ENCODE measurements at regions of chr14 and their contacts with region 1.

Region 1: DNA sequence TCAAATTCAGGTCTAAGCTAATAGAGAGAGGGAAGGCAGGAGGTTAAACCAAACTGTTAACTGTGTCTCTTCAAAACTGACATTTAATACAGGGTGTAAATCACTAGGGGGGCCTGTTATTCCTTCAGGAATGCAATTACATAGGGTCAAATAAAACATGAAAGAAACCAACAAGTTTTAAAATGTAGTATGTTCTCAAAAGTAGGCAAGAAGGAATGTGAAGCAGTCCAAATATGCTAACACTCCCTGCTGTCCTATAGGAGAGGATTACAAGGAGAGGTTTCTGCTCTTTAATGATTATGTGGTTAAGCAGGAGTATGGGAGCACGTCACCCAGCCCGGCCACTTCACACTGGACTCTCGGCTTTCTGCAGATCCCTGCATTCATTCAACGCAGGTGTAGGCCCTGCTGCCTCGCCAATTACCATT is 42.5 kb upstream of the BMP4 start:
- DNase-seq: peak; percentile 88 to 93
- H3K4me3 ChIP-seq: no peak overlapping the region
- H3K4me3 Mint-ChIP-seq: peak overlapping the region; percentile 61
- H3K27ac Mint-ChIP-seq: peak overlapping the region; percentile 96
- H3K4me1 ChIP-seq: peaks cover 58% of the 10 kb centered on the region
- H3K4me1 Mint-ChIP-seq: peaks cover 50% of the 10 kb centered on the region
- H3K27me3 ChIP-seq: no peaks in the 10 kb centered on the region
- H3K27me3 Mint-ChIP-seq: no peaks in the 10 kb centered on the region
- CTCF ChIP-seq: no peak

Region 2: GRCh38 chr14:53850714-53851296 is 148.3 kb before region 1 on chr14:
- CTCF ChIA-PET with region 1: no interaction called
- POLR2A ChIA-PET with region 1: no interaction called
- intact Hi-C with region 1: loop called (anchors 2 kb)
- DNase-seq: peak; percentile 50 to 57
- H3K4me3 ChIP-seq: peak overlapping the region; percentile 10
- H3K4me3 Mint-ChIP-seq: peak overlapping the region; percentile 75
- H3K27ac Mint-ChIP-seq: peak overlapping the region; percentile 86
- H3K4me1 ChIP-seq: peaks cover 68% of the 10 kb centered on the region
- H3K4me1 Mint-ChIP-seq: peaks cover 38% of the 10 kb centered on the region
- H3K27me3 ChIP-seq: no peaks in the 10 kb centered on the region
- H3K27me3 Mint-ChIP-seq: no peaks in the 10 kb centered on the region
- CTCF ChIP-seq: no peak

Region 3: DNA sequence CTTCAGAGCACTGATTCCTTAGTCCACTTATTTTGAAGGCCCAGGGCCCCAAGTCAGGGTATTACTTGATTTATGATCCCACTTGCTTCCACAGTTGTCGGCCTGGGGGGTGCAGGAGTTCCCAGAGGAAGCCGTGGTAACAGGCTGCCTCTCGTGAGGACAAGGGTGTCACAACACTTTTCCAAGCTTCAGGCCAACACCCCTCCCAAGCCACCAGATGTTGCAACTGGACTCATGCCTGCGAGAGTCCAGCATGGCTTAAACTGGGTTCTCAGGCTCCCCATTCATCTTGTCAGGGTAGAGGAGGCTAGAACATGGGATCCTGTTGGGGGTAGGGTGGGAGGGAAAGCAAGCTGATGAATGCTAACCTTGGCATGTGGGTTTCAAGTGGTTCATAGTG is 98.6 kb before region 1 on chr14:
- CTCF ChIA-PET with region 1: no interaction called
- POLR2A ChIA-PET with region 1: no interaction called
- intact Hi-C with region 1: no loop called
- DNase-seq: no peak
- H3K4me3 ChIP-seq: no peak overlapping the region
- H3K4me3 Mint-ChIP-seq: no peak overlapping the region
- H3K27ac Mint-ChIP-seq: no peak overlapping the region
- H3K4me1 ChIP-seq: no peaks in the 10 kb centered on the region
- H3K4me1 Mint-ChIP-seq: no peaks in the 10 kb centered on the region
- H3K27me3 ChIP-seq: no peaks in the 10 kb centered on the region
- H3K27me3 Mint-ChIP-seq: no peaks in the 10 kb centered on the region
- CTCF ChIP-seq: no peak

Region 4: GRCh38 chr14:53929871-53930715 is 69.0 kb before region 1 on chr14:
- CTCF ChIA-PET with region 1: interaction called, 11 read pairs
- POLR2A ChIA-PET with region 1: no interaction called
- intact Hi-C with region 1: loop called (anchors 1 kb)
- DNase-seq: peak; percentile 82 to 84
- H3K4me3 ChIP-seq: no peak overlapping the region
- H3K4me3 Mint-ChIP-seq: no peak overlapping the region
- H3K27ac Mint-ChIP-seq: peak overlapping the region; percentile 68
- H3K4me1 ChIP-seq: peaks cover 39% of the 10 kb centered on the region
- H3K4me1 Mint-ChIP-seq: peaks cover 37% of the 10 kb centered on the region
- H3K27me3 ChIP-seq: no peaks in the 10 kb centered on the region
- H3K27me3 Mint-ChIP-seq: no peaks in the 10 kb centered on the region
- CTCF ChIP-seq: peak; percentile 93 to 98

Region 5: GRCh38 chr14:53963320-53964227 is 35.5 kb before region 1 on chr14:
- CTCF ChIA-PET with region 1: interaction called, 19 read pairs
- POLR2A ChIA-PET with region 1: interaction called, 5 read pairs
- intact Hi-C with region 1: no loop called
- DNase-seq: peak; percentile 75 to 82
- H3K4me3 ChIP-seq: peak overlapping the region; percentile 51
- H3K4me3 Mint-ChIP-seq: peak overlapping the region; percentile 86
- H3K27ac Mint-ChIP-seq: peak overlapping the region; percentile 81
- H3K4me1 ChIP-seq: peaks cover 15% of the 10 kb centered on the region
- H3K4me1 Mint-ChIP-seq: peaks cover 14% of the 10 kb centered on the region
- H3K27me3 ChIP-seq: no peaks in the 10 kb centered on the region
- H3K27me3 Mint-ChIP-seq: no peaks in the 10 kb centered on the region
- CTCF ChIP-seq: peak in 1 of 2 experiments; percentile 43

Region 6: GRCh38 chr14:54048311-54048710 is 49.2 kb after region 1 on chr14:
- CTCF ChIA-PET with region 1: no interaction called
- POLR2A ChIA-PET with region 1: no interaction called
- intact Hi-C with region 1: loop called (anchors 1 kb)
- DNase-seq: no peak
- H3K4me3 ChIP-seq: no peak overlapping the region
- H3K4me3 Mint-ChIP-seq: no peak overlapping the region
- H3K27ac Mint-ChIP-seq: no peak overlapping the region
- H3K4me1 ChIP-seq: peaks cover 22% of the 10 kb centered on the region
- H3K4me1 Mint-ChIP-seq: peaks cover 29% of the 10 kb centered on the region
- H3K27me3 ChIP-seq: no peaks in the 10 kb centered on the region
- H3K27me3 Mint-ChIP-seq: no peaks in the 10 kb centered on the region
- CTCF ChIP-seq: no peak

Region 7: DNA sequence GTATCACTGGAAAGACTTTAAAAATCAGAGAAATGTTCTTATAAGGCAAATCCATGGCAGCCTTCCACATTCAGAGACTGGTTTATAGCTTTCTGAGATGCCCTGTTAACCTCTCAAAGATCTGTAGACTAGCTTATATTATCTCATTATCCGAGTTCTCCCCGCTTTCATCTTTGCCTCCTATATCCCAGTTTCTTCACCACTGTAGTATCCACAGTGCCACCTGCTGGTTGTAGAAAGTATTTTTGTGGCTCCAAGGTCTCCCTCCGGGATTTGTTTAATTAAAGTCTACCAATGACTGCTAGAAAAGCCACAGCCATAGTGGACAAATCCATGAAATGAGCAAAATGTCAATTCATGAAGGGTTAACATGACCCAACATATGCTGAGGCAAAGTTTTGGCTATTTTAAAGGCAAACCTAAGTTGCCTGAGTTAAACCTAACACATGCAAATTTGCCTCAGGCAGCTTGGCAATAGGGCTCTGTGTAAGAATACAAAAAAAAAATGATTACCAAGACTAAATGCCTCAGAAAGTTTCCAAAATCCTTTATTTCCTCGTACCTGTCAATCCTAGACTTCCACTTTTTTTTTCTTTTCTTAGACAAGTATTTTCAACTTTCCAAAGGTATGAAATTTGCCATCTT is 176.3 kb after region 1 on chr14:
- CTCF ChIA-PET with region 1: interaction called, 3 read pairs
- POLR2A ChIA-PET with region 1: no interaction called
- intact Hi-C with region 1: loop called (anchors 1 kb)
- DNase-seq: peak; percentile 76 to 83
- H3K4me3 ChIP-seq: no peak overlapping the region
- H3K4me3 Mint-ChIP-seq: no peak overlapping the region
- H3K27ac Mint-ChIP-seq: no peak overlapping the region
- H3K4me1 ChIP-seq: peaks cover 47% of the 10 kb centered on the region
- H3K4me1 Mint-ChIP-seq: peaks cover 33% of the 10 kb centered on the region
- H3K27me3 ChIP-seq: no peaks in the 10 kb centered on the region
- H3K27me3 Mint-ChIP-seq: no peaks in the 10 kb centered on the region
- CTCF ChIP-seq: peak; percentile 72 to 78